Activated naive CD4-positive, alpha-beta T cell treated with anti-CD3 and anti-CD28 coated beads for 36 hours (primary cell): ENCODE measurements at regions of chr3 and their contacts with region 1.

Region 1: GRCh38 chr3:60365360-60365759 is 885.9 kb downstream of the FHIT start:
- DNase-seq: no peak
- H3K4me3 Mint-ChIP-seq: no peak overlapping the region
- H3K27ac Mint-ChIP-seq: no peak overlapping the region
- H3K4me1 Mint-ChIP-seq: peaks cover 28% of the 10 kb centered on the region
- H3K27me3 Mint-ChIP-seq: peaks cover 2% of the 10 kb centered on the region

Region 2: GRCh38 chr3:60010781-60011180 is 354.6 kb before region 1 on chr3:
- CTCF ChIA-PET with region 1: no interaction called
- intact Hi-C with region 1: loop called (anchors 5 kb)
- DNase-seq: peak; percentile 80
- H3K4me3 Mint-ChIP-seq: peak overlapping the region; percentile 75
- H3K27ac Mint-ChIP-seq: peak overlapping the region; percentile 97
- H3K4me1 Mint-ChIP-seq: peaks cover 87% of the 10 kb centered on the region
- H3K27me3 Mint-ChIP-seq: no peaks in the 10 kb centered on the region

Region 3: DNA sequence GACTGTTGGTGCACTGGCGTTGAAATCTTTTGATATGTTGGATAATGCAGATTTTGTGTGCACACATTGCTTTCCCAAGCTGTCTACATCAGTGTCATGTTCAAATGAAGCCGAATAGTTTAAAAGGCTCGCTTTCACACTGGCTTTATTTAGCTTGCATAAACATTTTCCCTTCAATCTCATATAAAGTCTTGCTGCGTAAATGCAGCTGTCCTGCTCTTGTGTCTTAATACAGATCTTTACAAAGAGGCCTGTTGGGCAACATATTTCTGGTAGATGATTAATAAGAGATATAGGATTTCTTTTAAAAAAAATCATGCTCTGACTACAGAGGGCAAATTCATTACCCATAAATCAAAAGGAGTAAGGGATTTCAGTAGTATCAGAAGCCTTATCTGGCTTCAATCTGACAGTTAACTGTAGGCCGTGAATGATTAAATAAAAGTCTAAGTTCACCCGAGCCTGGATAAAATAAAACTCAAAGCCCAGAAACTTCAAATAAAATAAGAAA is 51.4 kb before region 1 on chr3:
- CTCF ChIA-PET with region 1: no interaction called
- intact Hi-C with region 1: loop called (anchors 2 kb)
- DNase-seq: no peak
- H3K4me3 Mint-ChIP-seq: no peak overlapping the region
- H3K27ac Mint-ChIP-seq: no peak overlapping the region
- H3K4me1 Mint-ChIP-seq: peaks cover 15% of the 10 kb centered on the region
- H3K27me3 Mint-ChIP-seq: no peaks in the 10 kb centered on the region

Region 4: GRCh38 chr3:60431599-60431958 is 66.2 kb after region 1 on chr3:
- CTCF ChIA-PET with region 1: no interaction called
- intact Hi-C with region 1: loop called (anchors 2 kb)
- DNase-seq: peak; percentile 23
- H3K4me3 Mint-ChIP-seq: no peak overlapping the region
- H3K27ac Mint-ChIP-seq: no peak overlapping the region
- H3K4me1 Mint-ChIP-seq: peaks cover 25% of the 10 kb centered on the region
- H3K27me3 Mint-ChIP-seq: no peaks in the 10 kb centered on the region

Region 5: DNA sequence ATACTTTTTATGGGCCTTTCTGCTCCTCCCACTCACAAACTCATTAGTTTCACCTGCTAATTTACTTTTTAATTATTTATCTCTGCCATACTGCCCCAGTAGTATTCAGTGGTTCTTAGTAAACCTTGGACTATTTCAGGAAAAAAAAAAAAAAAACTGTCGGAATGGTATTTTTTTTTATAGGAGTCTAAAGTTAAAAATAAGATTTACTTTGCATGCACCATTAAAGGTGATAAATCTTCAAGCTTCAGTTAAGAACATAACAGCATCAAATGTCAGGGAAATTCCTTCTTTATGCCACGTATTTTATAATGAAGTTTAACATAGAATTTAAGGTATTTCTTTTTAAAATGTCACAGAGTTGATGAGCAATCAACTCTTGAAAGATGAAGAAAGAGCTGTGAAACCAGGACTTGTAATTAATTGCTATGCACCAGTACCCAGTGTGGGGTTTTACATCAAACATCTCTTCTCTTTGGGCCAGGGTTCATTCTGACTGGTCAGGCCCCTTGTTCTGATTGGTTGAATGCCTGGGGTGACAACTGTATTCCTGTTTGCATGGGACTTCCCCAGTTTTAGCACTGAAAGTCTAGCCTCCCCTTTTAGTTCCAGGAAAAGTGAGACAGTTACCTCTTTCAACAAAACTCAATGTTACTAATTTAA is 1155.7 kb after region 1 on chr3:
- CTCF ChIA-PET with region 1: no interaction called
- intact Hi-C with region 1: loop called (anchors 2 kb)
- DNase-seq: peak; percentile 87
- H3K4me3 Mint-ChIP-seq: no peak overlapping the region
- H3K27ac Mint-ChIP-seq: peak overlapping the region; percentile 70
- H3K4me1 Mint-ChIP-seq: peaks cover 31% of the 10 kb centered on the region
- H3K27me3 Mint-ChIP-seq: peaks cover 3% of the 10 kb centered on the region